CD8-positive, alpha-beta memory T cell (primary cell): ENCODE measurements at regions of chr2 and their contacts with region 1.

Region 1: DNA sequence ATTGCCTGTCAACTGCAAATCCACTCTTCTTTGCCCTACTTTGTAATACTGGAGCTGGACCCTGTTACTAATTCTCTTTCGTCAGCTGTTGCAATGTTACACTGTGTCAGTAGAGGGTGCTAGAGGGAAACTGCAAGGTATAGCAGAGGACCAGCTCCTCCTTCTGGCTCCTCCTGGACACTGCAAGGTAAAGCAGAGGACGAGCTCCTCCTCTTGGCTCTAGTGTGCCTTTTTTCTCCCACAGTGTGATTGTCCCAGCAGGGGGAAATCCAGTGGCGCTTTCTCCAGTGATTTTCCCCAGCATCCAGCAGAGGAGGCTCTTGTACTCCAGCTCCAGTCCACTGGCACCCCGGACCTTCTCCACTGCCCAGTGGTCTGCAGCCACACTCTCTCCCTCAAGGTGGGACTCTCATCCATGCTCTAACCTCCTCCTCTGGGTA is 95.6 kb downstream of the CAPN13 start:
- DNase-seq: peak; percentile 69 to 90 (median 79)
- H3K4me3 ChIP-seq: no peak overlapping the region
- H3K4me3 Mint-ChIP-seq: no peak overlapping the region
- H3K27ac ChIP-seq: no peak overlapping the region
- H3K27ac Mint-ChIP-seq: no peak overlapping the region
- H3K4me1 ChIP-seq: peaks cover 5% of the 10 kb centered on the region
- H3K4me1 Mint-ChIP-seq: peaks cover 0 to 8% (median 7%) of the 10 kb centered on the region in 3 donors
- H3K27me3 ChIP-seq: no peaks in the 10 kb centered on the region
- H3K27me3 Mint-ChIP-seq: peaks cover 1 to 8% of the 10 kb centered on the region in 2 donors

Region 2: GRCh38 chr2:30155889-30156658 is 555.6 kb before region 1 on chr2:
- CTCF ChIA-PET with region 1: interaction called, 17 read pairs
- POLR2A ChIA-PET with region 1: no interaction called
- DNase-seq: no peak
- H3K4me3 ChIP-seq: no peak overlapping the region
- H3K4me3 Mint-ChIP-seq: peak overlapping the region in 2 of 7 donors; percentile 4 to 38
- H3K27ac ChIP-seq: no peak overlapping the region
- H3K27ac Mint-ChIP-seq: peak overlapping the region in 6 of 8 donors; percentile 8 to 97 (median 70)
- H3K4me1 ChIP-seq: peaks cover 15% of the 10 kb centered on the region
- H3K4me1 Mint-ChIP-seq: peaks cover 35 to 80% (median 62%) of the 10 kb centered on the region in 3 donors
- H3K27me3 ChIP-seq: no peaks in the 10 kb centered on the region
- H3K27me3 Mint-ChIP-seq: peaks cover 0 to 1% of the 10 kb centered on the region in 2 donors

Region 3: GRCh38 chr2:30208452-30208851 is 503.2 kb before region 1 on chr2:
- CTCF ChIA-PET with region 1: interaction called, 147 read pairs
- POLR2A ChIA-PET with region 1: no interaction called
- DNase-seq: peak in 3 of 5 donors; percentile 19 to 42 (median 38)
- H3K4me3 ChIP-seq: peak overlapping the region; percentile 13
- H3K4me3 Mint-ChIP-seq: peak overlapping the region in 5 of 7 donors; percentile 24 to 74 (median 59)
- H3K27ac ChIP-seq: no peak overlapping the region
- H3K27ac Mint-ChIP-seq: peak overlapping the region; percentile 20 to 93 (median 62)
- H3K4me1 ChIP-seq: peaks cover 26% of the 10 kb centered on the region
- H3K4me1 Mint-ChIP-seq: peaks cover 18 to 22% (median 19%) of the 10 kb centered on the region in 3 donors
- H3K27me3 ChIP-seq: no peaks in the 10 kb centered on the region
- H3K27me3 Mint-ChIP-seq: no peaks in the 10 kb centered on the region

Region 4: DNA sequence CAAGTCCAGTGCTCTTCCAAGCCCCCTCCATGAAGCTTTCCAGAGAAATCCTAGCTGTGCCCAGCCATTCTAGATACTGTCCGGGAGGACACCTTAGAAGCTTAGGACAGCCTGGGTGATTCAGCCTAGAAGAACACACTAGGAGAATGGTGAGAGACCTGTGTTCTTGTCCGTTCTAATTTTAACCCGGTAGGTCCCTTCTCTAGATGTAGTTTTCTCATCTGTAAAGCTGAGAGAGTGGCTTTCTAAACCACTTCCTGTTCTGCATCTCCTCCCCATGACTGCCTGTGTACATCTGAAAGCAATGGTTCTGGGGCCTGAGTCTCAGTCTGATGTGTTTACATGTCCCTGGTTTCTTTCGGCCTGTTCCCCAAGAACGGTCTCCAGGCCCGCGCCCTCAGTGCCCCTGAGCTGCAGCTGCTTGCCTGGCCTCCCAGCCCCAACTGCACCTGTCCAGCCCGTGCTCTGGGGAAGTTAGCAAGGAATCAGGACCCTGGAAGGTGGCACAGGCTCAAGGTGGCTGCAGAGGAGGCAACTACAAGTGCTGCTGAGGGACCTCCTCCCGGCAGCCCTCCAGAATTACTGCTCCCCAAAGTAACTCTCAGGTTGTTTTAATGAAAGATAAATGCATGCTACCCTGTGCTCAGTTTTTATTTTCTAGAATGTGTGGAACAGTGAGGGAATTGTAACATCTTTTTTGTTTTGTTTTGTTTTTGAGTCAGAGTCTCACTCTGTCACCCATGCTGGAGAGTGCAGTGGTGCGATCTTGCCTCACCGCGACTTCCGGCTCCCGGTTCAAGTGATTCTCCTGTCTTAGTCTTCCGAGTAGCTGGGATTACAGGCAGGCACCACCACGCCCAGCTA is 374.5 kb before region 1 on chr2:
- CTCF ChIA-PET with region 1: interaction called, 11 read pairs
- POLR2A ChIA-PET with region 1: no interaction called
- DNase-seq: peak in 4 of 5 donors; percentile 24 to 70 (median 58)
- H3K4me3 ChIP-seq: peak overlapping the region; percentile 40
- H3K4me3 Mint-ChIP-seq: peak overlapping the region; percentile 44 to 91 (median 85)
- H3K27ac ChIP-seq: peak overlapping the region; percentile 55
- H3K27ac Mint-ChIP-seq: peak overlapping the region; percentile 92 to 100 (median 97)
- H3K4me1 ChIP-seq: peaks cover 67% of the 10 kb centered on the region
- H3K4me1 Mint-ChIP-seq: peaks cover 66 to 75% (median 70%) of the 10 kb centered on the region in 3 donors
- H3K27me3 ChIP-seq: no peaks in the 10 kb centered on the region
- H3K27me3 Mint-ChIP-seq: no peaks in the 10 kb centered on the region

Region 5: GRCh38 chr2:30666307-30666874 is 45.3 kb before region 1 on chr2:
- CTCF ChIA-PET with region 1: no interaction called
- POLR2A ChIA-PET with region 1: no interaction called
- DNase-seq: no peak
- H3K4me3 ChIP-seq: no peak overlapping the region
- H3K4me3 Mint-ChIP-seq: no peak overlapping the region
- H3K27ac ChIP-seq: no peak overlapping the region
- H3K27ac Mint-ChIP-seq: peak overlapping the region in 1 of 8 donors; percentile 37
- H3K4me1 ChIP-seq: no peaks in the 10 kb centered on the region
- H3K4me1 Mint-ChIP-seq: no peaks in the 10 kb centered on the region
- H3K27me3 ChIP-seq: no peaks in the 10 kb centered on the region
- H3K27me3 Mint-ChIP-seq: peaks cover 3 to 16% of the 10 kb centered on the region in 2 donors

Region 6: GRCh38 chr2:30721668-30722647 is 10.3 kb after region 1 on chr2:
- CTCF ChIA-PET with region 1: interaction called, 10 read pairs
- POLR2A ChIA-PET with region 1: no interaction called
- DNase-seq: no peak
- H3K4me3 ChIP-seq: no peak overlapping the region
- H3K4me3 Mint-ChIP-seq: peak overlapping the region in 1 of 7 donors; percentile 32
- H3K27ac ChIP-seq: no peak overlapping the region
- H3K27ac Mint-ChIP-seq: no peak overlapping the region
- H3K4me1 ChIP-seq: no peaks in the 10 kb centered on the region
- H3K4me1 Mint-ChIP-seq: no peaks in the 10 kb centered on the region
- H3K27me3 ChIP-seq: peaks cover 4% of the 10 kb centered on the region
- H3K27me3 Mint-ChIP-seq: peaks cover 13 to 39% of the 10 kb centered on the region in 2 donors

Region 7: DNA sequence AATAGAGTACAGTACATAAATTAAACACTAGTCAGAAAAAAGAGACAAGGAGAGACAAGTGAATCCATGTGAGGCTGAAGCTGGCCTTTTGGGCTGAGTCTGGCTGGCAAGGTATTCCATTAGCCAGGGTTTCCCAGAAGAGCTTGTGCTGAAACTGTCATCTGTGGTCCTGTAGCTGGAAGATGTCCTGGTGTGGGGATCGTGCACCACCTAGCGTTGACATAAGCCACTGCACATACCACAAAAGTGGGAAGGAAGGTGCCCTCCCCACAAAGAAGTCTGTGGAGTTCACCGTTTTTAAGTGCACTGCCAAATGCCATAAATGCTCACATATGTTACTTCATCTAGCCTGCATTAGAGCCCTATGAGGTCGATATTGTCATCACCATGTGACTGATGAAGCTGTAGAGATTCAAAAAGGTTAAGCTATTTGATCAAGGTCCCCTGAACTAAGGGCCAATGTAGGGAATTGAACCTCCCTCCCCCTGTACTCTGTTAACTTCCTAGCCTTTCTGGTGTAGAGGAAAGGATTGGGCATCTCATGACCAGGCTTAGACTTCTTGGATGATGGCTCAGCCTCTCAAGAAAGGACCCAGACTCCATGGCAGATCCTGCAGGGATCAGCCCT is 458.5 kb after region 1 on chr2:
- CTCF ChIA-PET with region 1: interaction called, 16 read pairs
- POLR2A ChIA-PET with region 1: no interaction called
- DNase-seq: peak; percentile 14 to 60 (median 17)
- H3K4me3 ChIP-seq: no peak overlapping the region
- H3K4me3 Mint-ChIP-seq: no peak overlapping the region
- H3K27ac ChIP-seq: no peak overlapping the region
- H3K27ac Mint-ChIP-seq: no peak overlapping the region
- H3K4me1 ChIP-seq: no peaks in the 10 kb centered on the region
- H3K4me1 Mint-ChIP-seq: no peaks in the 10 kb centered on the region
- H3K27me3 ChIP-seq: no peaks in the 10 kb centered on the region
- H3K27me3 Mint-ChIP-seq: peaks cover 4 to 6% of the 10 kb centered on the region in 2 donors